Activated B cell treated with CpG ODN at 0.5 μM for 24 hours (primary cell): ENCODE measurements at regions of chr11 and their contacts with region 1.

Region 1: GRCh38 chr11:1382831-1383607 is 6.7 kb upstream of the BRSK2 start:
- DNase-seq: peak; percentile 68
- ATAC-seq: peak; percentile 74
- H3K4me3 Mint-ChIP-seq: peak overlapping the region; percentile 85
- H3K27ac Mint-ChIP-seq: peak overlapping the region; percentile 91
- H3K4me1 Mint-ChIP-seq: peaks cover 31% of the 10 kb centered on the region
- H3K27me3 Mint-ChIP-seq: peaks cover 1% of the 10 kb centered on the region
- CTCF ChIP-seq: no peak

Region 2: DNA sequence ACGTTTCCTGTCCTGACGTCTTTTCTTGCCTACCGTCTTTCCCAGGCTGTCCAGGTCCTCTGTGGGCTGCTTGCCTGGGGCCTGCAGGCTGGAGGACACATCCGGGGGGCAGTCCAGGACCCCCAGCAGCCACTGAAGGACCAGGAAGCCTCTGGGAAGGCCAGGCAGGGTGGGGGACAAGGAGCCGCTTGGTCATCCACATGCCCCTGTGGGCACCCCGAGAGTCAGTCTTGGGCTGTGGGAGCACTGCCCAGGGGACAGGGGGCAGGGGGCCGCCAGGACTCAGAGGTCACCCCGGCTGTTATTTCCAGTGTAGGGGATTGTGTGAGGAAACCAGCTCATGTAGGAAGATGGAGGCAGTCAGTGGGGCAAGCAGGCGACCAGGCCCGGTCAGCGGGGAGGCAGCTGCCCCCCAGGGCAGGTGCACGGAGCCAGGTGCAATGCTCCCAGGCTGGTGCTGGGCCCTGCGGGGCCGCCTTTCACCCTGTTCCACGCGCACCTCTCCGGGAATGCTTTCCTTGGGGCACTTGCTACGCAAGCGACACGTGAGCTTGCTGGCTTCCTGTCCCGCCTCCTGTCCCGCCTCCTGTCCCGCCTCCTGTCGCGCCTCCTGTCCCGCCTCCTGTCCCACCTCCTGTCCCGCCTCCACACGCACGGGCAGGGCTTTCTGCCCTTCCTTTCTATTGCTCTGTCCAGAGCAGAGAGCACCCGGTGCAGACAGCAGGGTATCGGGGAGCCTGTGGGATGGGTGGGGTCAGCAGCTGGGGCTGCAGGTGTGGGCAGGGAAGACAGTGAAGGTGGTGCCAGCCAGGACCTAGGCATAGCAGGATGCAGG is 120.6 kb before region 1 on chr11:
- CTCF ChIA-PET with region 1: no interaction called
- POLR2A ChIA-PET with region 1: interaction called, 3 read pairs
- intact Hi-C with region 1: loop called (anchors 1 kb)
- DNase-seq: peak; percentile 74
- ATAC-seq: peak; percentile 90
- H3K4me3 Mint-ChIP-seq: peak overlapping the region; percentile 79
- H3K27ac Mint-ChIP-seq: peak overlapping the region; percentile 83
- H3K4me1 Mint-ChIP-seq: peaks cover 15% of the 10 kb centered on the region
- H3K27me3 Mint-ChIP-seq: no peaks in the 10 kb centered on the region
- CTCF ChIP-seq: no peak

Region 3: GRCh38 chr11:1335811-1336761 is 46.9 kb before region 1 on chr11:
- CTCF ChIA-PET with region 1: no interaction called
- POLR2A ChIA-PET with region 1: interaction called, 3 read pairs
- intact Hi-C with region 1: loop called (anchors 1 kb)
- DNase-seq: peak; percentile 41
- ATAC-seq: peak; percentile 60
- H3K4me3 Mint-ChIP-seq: peak overlapping the region; percentile 82
- H3K27ac Mint-ChIP-seq: peak overlapping the region; percentile 57
- H3K4me1 Mint-ChIP-seq: peaks cover 18% of the 10 kb centered on the region
- H3K27me3 Mint-ChIP-seq: no peaks in the 10 kb centered on the region
- CTCF ChIP-seq: no peak